ENCODE measurements at regions of chr11 and their contacts with region 1.

Region 1: GRCh38 chr11:131534611-131535010 is 164.2 kb downstream of the NTM start:
- DNase-seq: no peak
- ATAC-seq: no peak
- H3K4me3 ChIP-seq: no peak overlapping the region
- H3K27ac ChIP-seq: no peak overlapping the region
- H3K4me1 ChIP-seq: no peaks in the 10 kb centered on the region
- H3K27me3 ChIP-seq: peaks cover 0 to 22% (median 0%) of the 10 kb centered on the region in 9 donors
- CTCF ChIP-seq: no peak
- POLR2A ChIP-seq: no peak

Region 2: DNA sequence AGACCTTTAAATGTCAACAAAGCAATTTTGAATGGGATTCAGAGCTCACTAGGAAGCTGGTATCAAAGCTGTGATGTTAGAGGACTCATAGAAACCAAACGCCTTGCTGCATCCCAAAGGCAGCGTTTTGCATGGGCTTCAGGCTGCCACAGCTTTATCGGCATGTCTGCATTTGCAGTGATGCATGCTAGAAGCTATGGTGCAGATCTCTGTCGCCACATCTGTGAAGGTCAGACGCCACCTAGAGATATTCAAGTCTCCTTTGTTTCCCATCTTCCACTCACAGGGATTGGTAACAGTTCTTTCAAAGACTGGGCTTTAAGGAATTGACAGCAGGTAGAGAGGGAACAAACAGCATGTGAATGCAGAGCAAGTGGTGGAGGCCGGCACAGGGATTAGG is 116.4 kb before region 1 on chr11:
- intact Hi-C with region 1: no loop called
- DNase-seq: no peak
- ATAC-seq: no peak
- H3K4me3 ChIP-seq: no peak overlapping the region
- H3K27ac ChIP-seq: no peak overlapping the region
- H3K4me1 ChIP-seq: no peaks in the 10 kb centered on the region
- H3K27me3 ChIP-seq: peaks cover 0 to 22% (median 0%) of the 10 kb centered on the region in 9 donors
- CTCF ChIP-seq: no peak
- POLR2A ChIP-seq: no peak

Region 3: GRCh38 chr11:131481303-131481702 is 53.3 kb before region 1 on chr11:
- intact Hi-C with region 1: loop called in 1 of 10 experiments (anchors 5 kb)
- DNase-seq: no peak
- ATAC-seq: peak in 2 of 4 donors; percentile 34
- H3K4me3 ChIP-seq: no peak overlapping the region
- H3K27ac ChIP-seq: no peak overlapping the region
- H3K4me1 ChIP-seq: no peaks in the 10 kb centered on the region
- H3K27me3 ChIP-seq: peaks cover 0 to 6% (median 0%) of the 10 kb centered on the region in 9 donors
- CTCF ChIP-seq: no peak
- POLR2A ChIP-seq: no peak

Region 4: DNA sequence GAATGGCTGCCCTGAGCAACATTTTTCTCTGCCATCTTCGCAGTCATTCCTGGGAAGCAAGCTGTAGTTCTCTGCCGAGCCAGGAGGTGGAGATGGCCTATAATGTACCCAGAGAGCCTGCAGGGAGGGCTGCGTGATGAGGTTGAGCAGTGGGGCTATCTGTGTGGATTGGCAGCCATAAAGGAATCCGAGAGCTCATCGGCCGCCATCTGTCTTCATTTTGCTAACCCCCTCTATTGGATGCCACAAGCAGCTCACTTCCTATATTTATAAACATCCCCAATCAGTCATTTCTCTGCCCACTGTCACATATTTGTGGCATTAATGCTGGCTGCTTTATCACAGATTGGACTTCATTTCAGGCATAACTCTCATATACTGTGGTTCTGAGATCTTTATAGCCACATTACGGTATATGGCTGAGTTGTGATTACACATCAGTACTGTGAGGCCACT is 45.3 kb after region 1 on chr11:
- intact Hi-C with region 1: no loop called
- DNase-seq: no peak
- ATAC-seq: peak in 2 of 4 donors; percentile 36 to 55
- H3K4me3 ChIP-seq: no peak overlapping the region
- H3K27ac ChIP-seq: no peak overlapping the region
- H3K4me1 ChIP-seq: no peaks in the 10 kb centered on the region
- H3K27me3 ChIP-seq: peaks cover 0 to 12% (median 0%) of the 10 kb centered on the region in 9 donors
- CTCF ChIP-seq: peak in 7 of 12 donors; percentile 11 to 41 (median 24)
- POLR2A ChIP-seq: no peak

Region 5: GRCh38 chr11:131591051-131591461 is 56.4 kb after region 1 on chr11:
- intact Hi-C with region 1: no loop called
- DNase-seq: no peak
- ATAC-seq: no peak
- H3K4me3 ChIP-seq: no peak overlapping the region
- H3K27ac ChIP-seq: no peak overlapping the region
- H3K4me1 ChIP-seq: no peaks in the 10 kb centered on the region
- H3K27me3 ChIP-seq: peaks cover 0 to 39% (median 0%) of the 10 kb centered on the region in 9 donors
- CTCF ChIP-seq: no peak
- POLR2A ChIP-seq: no peak

Measured in heart left ventricle (tissue), 16 donors.